B cell (primary cell): ENCODE measurements at regions of chr2 and their contacts with region 1.

Region 1: GRCh38 chr2:222860740-222861410 is at the start of gene ACSL3:
- DNase-seq: peak; percentile 93
- ATAC-seq: peak; percentile 97
- H3K4me3 ChIP-seq: peak within 1 kb of the TSS; percentile 61 to 93 (median 69)
- H3K4me3 Mint-ChIP-seq: peak within 1 kb of the TSS; percentile 82
- H3K27ac ChIP-seq: peak within 1 kb of the TSS; percentile 56 to 89
- H3K27ac Mint-ChIP-seq: peak within 1 kb of the TSS; percentile 88
- H3K4me1 ChIP-seq: peaks cover 20 to 23% of the 10 kb centered on the region in 2 donors
- H3K4me1 Mint-ChIP-seq: peaks cover 14% of the 10 kb centered on the region
- H3K27me3 ChIP-seq: no peaks in the 10 kb centered on the region
- H3K27me3 Mint-ChIP-seq: no peaks in the 10 kb centered on the region
- CTCF ChIP-seq: peak; percentile 8
- total RNA-seq, gene ACSL3: 35.9 and 46.0 TPM in 2 replicates

Region 2: GRCh38 chr2:221372159-221372884 is 1488.6 kb before region 1 on chr2:
- CTCF ChIA-PET with region 1: no interaction called
- POLR2A ChIA-PET with region 1: no interaction called
- intact Hi-C with region 1: no loop called
- DNase-seq: no peak
- ATAC-seq: no peak
- H3K4me3 ChIP-seq: no peak overlapping the region
- H3K4me3 Mint-ChIP-seq: no peak overlapping the region
- H3K27ac ChIP-seq: no peak overlapping the region
- H3K27ac Mint-ChIP-seq: no peak overlapping the region
- H3K4me1 ChIP-seq: no peaks in the 10 kb centered on the region
- H3K4me1 Mint-ChIP-seq: no peaks in the 10 kb centered on the region
- H3K27me3 ChIP-seq: peaks cover 0 to 4% (median 0%) of the 10 kb centered on the region in 4 experiments
- H3K27me3 Mint-ChIP-seq: peaks cover 37% of the 10 kb centered on the region
- CTCF ChIP-seq: no peak

Region 3: GRCh38 chr2:222792001-222792611 is 68.8 kb before region 1 on chr2:
- CTCF ChIA-PET with region 1: no interaction called
- POLR2A ChIA-PET with region 1: no interaction called
- intact Hi-C with region 1: loop called (anchors 2 kb)
- DNase-seq: no peak
- ATAC-seq: no peak
- H3K4me3 ChIP-seq: no peak overlapping the region
- H3K4me3 Mint-ChIP-seq: no peak overlapping the region
- H3K27ac ChIP-seq: no peak overlapping the region
- H3K27ac Mint-ChIP-seq: no peak overlapping the region
- H3K4me1 ChIP-seq: peaks cover 12 to 16% of the 10 kb centered on the region in 2 donors
- H3K4me1 Mint-ChIP-seq: peaks cover 12% of the 10 kb centered on the region
- H3K27me3 ChIP-seq: no peaks in the 10 kb centered on the region
- H3K27me3 Mint-ChIP-seq: no peaks in the 10 kb centered on the region
- CTCF ChIP-seq: no peak